ENCODE measurements at regions of chr5 and their contacts with region 1.

Region 1: DNA sequence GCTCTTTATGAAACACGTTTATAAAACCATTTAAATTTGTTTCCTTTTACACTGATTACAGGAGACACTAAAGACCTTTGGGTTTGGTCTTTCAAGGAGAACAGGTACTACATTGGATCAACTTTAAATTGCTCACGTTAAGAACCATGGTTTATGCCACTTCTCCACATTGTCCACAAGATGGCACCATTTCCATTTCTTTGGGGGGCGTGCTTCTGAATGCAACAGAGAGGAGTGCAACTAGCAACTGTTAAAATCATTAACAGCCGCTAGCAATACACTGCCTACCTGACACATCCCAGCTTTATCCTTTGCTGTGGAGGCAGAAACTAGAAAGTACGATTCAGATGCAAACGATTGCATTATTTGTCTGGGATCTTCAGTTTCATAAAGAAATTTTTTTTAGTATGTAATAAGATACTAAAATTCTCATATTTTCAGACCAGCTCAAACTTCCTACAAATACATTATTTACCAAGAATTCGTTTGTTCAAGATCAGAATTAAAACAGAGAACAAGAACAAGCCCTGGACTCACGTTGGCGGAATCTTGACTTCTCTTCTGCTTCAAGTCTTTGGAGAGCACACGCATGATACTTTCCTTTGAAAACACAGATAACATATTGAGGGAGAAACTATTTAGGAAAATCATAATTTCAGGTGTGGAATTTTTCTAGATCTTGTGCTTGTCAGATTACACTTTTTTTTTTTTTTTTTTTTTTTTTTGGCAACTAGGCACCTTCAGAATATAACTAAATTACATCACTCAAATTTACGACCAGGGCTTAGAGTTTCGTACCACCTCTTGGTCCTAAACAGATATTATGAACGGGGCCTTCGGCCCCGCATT is 702 bp downstream of the CDC20B start:
- DNase-seq: peak; percentile 21 to 92
- ATAC-seq: peak; percentile 59 to 75 (median 63)
- H3K4me3 ChIP-seq: peak overlapping the region; percentile 51
- H3K4me3 Mint-ChIP-seq: peak overlapping the region; percentile 86
- H3K27ac ChIP-seq: peak overlapping the region; percentile 20
- H3K27ac Mint-ChIP-seq: peak overlapping the region; percentile 82 to 94
- H3K4me1 ChIP-seq: peaks cover 30% of the 10 kb centered on the region
- H3K4me1 Mint-ChIP-seq: peaks cover 26 to 36% of the 10 kb centered on the region in 2 donors
- H3K27me3 ChIP-seq: peaks cover 52% of the 10 kb centered on the region
- H3K27me3 Mint-ChIP-seq: peaks cover 38 to 55% of the 10 kb centered on the region in 2 donors
- CTCF ChIP-seq: peak; percentile 88

Region 2: GRCh38 chr5:54310433-54311175 is 861.7 kb before region 1 on chr5 and contains the start of gene ARL15:
- intact Hi-C with region 1: loop called (anchors 10 kb)
- DNase-seq: peak; percentile 96 to 98
- ATAC-seq: peak; percentile 93 to 98 (median 94)
- H3K4me3 ChIP-seq: peak within 1 kb of the TSS; percentile 79
- H3K4me3 Mint-ChIP-seq: peak within 1 kb of the TSS; percentile 98
- H3K27ac ChIP-seq: peak within 1 kb of the TSS; percentile 67
- H3K27ac Mint-ChIP-seq: peak within 1 kb of the TSS; percentile 90 to 98
- H3K4me1 ChIP-seq: peaks cover 14% of the 10 kb centered on the region
- H3K4me1 Mint-ChIP-seq: peaks cover 44 to 46% of the 10 kb centered on the region in 2 donors
- H3K27me3 ChIP-seq: no peaks in the 10 kb centered on the region
- H3K27me3 Mint-ChIP-seq: peaks cover 0 to 7% of the 10 kb centered on the region in 2 donors
- CTCF ChIP-seq: no peak
- total RNA-seq, gene ARL15: 28.9 to 35.1 (median 33.1) TPM

Region 3: DNA sequence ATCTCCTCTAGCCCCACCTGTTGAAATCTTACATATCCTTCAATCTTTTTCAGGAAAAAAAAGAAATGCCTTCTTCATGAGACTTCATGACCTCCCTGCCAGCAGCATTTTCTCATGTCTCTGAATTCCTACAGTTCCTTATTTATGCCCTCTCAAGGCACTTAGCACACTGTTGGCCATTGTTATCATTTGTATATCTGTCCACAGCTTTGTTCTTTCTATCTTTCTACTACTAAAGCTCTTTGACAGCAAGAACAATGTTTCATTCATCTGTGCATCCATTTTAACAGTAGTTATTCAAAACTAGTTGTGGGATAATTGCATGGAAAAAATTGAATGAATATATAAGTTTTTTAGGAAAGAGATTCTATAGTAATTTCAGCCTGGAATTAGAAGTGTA is 90.7 kb before region 1 on chr5:
- intact Hi-C with region 1: no loop called
- DNase-seq: no peak
- ATAC-seq: no peak
- H3K4me3 ChIP-seq: no peak overlapping the region
- H3K4me3 Mint-ChIP-seq: no peak overlapping the region
- H3K27ac ChIP-seq: no peak overlapping the region
- H3K27ac Mint-ChIP-seq: no peak overlapping the region
- H3K4me1 ChIP-seq: no peaks in the 10 kb centered on the region
- H3K4me1 Mint-ChIP-seq: peaks cover 11% of the 10 kb centered on the region in 2 donors
- H3K27me3 ChIP-seq: no peaks in the 10 kb centered on the region
- H3K27me3 Mint-ChIP-seq: no peaks in the 10 kb centered on the region
- CTCF ChIP-seq: no peak

Region 4: DNA sequence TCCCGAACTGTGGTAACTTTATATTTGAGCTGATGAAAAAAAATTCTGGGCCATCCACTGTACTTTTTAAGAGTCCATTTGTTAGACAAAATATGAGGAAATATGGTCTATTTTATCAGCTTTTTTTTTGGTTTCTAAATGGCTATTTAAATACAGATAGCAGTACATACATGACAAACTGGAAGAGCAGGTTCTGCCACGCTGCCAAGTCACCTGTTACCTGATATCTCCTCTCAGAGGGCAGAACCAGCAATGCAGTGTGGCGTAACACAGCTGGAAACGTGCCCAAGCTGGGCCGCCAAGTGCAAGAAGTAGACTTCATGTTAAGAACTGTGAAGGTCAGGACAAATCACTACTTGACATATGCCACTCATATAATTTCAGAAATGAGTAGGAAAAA is 46.7 kb after region 1 on chr5:
- intact Hi-C with region 1: no loop called
- DNase-seq: no peak
- ATAC-seq: no peak
- H3K4me3 ChIP-seq: no peak overlapping the region
- H3K4me3 Mint-ChIP-seq: no peak overlapping the region
- H3K27ac ChIP-seq: no peak overlapping the region
- H3K27ac Mint-ChIP-seq: no peak overlapping the region
- H3K4me1 ChIP-seq: peaks cover 21% of the 10 kb centered on the region
- H3K4me1 Mint-ChIP-seq: peaks cover 21% of the 10 kb centered on the region in 2 donors
- H3K27me3 ChIP-seq: peaks cover 37% of the 10 kb centered on the region
- H3K27me3 Mint-ChIP-seq: peaks cover 55 to 62% of the 10 kb centered on the region in 2 donors
- CTCF ChIP-seq: no peak

Region 5: GRCh38 chr5:55232985-55233928 is 61.0 kb after region 1 on chr5 and contains the start of gene CCNO:
- intact Hi-C with region 1: loop called (anchors 1 kb)
- DNase-seq: peak; percentile 29 to 74
- ATAC-seq: peak; percentile 66 to 76 (median 71)
- H3K4me3 ChIP-seq: peak within 1 kb of the TSS; percentile 43
- H3K4me3 Mint-ChIP-seq: peak within 1 kb of the TSS; percentile 82
- H3K27ac ChIP-seq: no peak within 1 kb of the TSS
- H3K27ac Mint-ChIP-seq: peak within 1 kb of the TSS in 1 of 2 donors; percentile 61
- H3K4me1 ChIP-seq: peaks cover 36% of the 10 kb centered on the region
- H3K4me1 Mint-ChIP-seq: peaks cover 30 to 31% of the 10 kb centered on the region in 2 donors
- H3K27me3 ChIP-seq: peaks cover 60% of the 10 kb centered on the region
- H3K27me3 Mint-ChIP-seq: peaks cover 57 to 58% of the 10 kb centered on the region in 2 donors
- CTCF ChIP-seq: no peak
- total RNA-seq, gene CCNO: not detected

Region 6: GRCh38 chr5:55286411-55286933 is 114.2 kb after region 1 on chr5:
- intact Hi-C with region 1: no loop called
- DNase-seq: no peak
- ATAC-seq: no peak
- H3K4me3 ChIP-seq: no peak overlapping the region
- H3K4me3 Mint-ChIP-seq: no peak overlapping the region
- H3K27ac ChIP-seq: no peak overlapping the region
- H3K27ac Mint-ChIP-seq: no peak overlapping the region
- H3K4me1 ChIP-seq: no peaks in the 10 kb centered on the region
- H3K4me1 Mint-ChIP-seq: no peaks in the 10 kb centered on the region
- H3K27me3 ChIP-seq: no peaks in the 10 kb centered on the region
- H3K27me3 Mint-ChIP-seq: no peaks in the 10 kb centered on the region
- CTCF ChIP-seq: no peak

Region 7: DNA sequence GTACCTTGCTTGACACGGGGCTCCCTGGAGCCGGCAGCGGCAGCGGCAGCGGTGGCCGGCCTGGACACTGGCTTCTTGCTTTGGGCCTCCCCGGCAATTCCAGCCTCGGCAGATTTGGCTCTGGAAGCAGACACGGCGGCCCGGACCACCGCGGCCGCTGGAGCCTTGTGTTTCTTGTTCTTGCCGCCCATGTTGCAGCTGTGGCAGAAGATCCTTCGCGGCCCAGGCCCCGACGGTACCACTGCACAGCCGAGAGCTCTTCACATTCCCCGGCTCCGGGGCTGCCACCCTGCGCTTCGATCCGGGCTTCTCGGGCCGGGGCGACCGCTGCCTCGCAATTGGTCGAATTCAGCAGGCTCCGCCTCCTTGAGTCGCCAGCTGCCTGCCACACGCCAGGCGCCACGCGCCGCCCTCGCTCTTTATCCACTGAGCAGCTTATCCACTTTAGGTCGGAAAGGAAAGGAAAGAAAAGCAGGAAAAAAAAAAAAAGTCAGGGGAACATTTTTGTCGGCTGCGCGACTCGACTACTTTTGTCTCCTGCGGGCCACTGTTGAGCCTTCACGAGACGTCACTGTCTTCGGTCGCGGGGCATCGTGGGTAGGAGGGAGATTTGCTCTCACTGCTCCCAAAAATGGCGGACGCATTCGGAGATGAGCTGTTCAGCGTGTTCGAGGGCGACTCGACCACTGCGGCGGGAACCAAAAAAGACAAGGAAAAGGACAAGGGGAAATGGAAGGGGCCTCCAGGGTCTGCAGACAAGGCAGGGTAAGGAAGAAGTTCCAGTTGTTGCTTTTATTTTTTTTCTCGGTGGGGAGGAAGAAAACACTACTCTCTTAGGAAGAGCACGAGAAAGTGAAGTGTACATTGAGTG is 135.3 kb after region 1 on chr5 and contains the starts of genes DHX29 and MTREX:
- intact Hi-C with region 1: loop called (anchors 2 kb)
- DNase-seq: peak; percentile 90 to 93
- ATAC-seq: peak; percentile 91 to 95 (median 93)
- H3K4me3 ChIP-seq: peak within 1 kb of the TSS; percentile 64
- H3K4me3 Mint-ChIP-seq: no peak within 1 kb of the TSS
- H3K27ac ChIP-seq: peak within 1 kb of the TSS; percentile 93
- H3K27ac Mint-ChIP-seq: no peak within 1 kb of the TSS
- H3K4me1 ChIP-seq: peaks cover 17% of the 10 kb centered on the region
- H3K4me1 Mint-ChIP-seq: peaks cover 23 to 24% of the 10 kb centered on the region in 2 donors
- H3K27me3 ChIP-seq: no peaks in the 10 kb centered on the region
- H3K27me3 Mint-ChIP-seq: no peaks in the 10 kb centered on the region
- CTCF ChIP-seq: no peak
- total RNA-seq, gene DHX29: 16.7 to 22.0 (median 19.3) TPM
- total RNA-seq, gene MTREX: 64.5 to 82.2 (median 77.6) TPM

Region 8: DNA sequence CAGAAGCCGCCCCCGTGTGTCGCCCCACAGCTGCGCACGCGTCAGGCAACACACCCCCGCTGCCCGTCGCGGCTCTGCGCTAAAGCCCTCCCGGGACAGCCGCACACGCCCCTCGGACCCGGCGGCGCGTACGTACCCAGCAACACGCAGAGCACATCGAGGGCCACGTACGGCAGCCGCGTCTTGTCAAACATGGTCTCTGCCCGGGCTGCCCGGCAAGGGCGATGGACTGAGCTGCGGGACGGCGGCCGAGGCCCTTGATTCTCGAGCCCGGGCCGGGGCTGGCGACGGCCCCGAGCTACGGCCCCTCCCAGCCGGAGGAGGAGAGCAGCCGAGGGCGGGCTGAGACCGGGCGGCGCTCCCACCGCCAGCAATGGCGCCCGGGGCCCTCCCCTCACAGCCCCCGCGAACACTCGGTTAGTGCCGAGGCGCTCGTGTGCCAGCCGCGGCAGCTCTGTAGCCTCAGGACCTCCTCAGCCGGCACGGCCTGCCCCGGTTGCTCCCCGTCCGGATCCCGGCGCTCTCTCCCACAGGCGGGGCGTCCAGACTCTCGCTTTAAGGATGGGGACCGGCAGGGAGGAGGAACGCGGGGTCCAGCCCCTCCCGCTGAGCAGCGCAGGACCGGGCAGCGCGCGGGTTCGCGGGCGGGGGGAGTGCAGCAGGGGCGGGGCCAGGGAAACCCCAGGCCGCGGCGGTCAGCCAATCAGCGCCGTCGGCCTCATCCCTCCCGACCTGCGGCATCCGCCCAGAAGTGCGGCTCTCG is 362.3 kb after region 1 on chr5 and contains the start of gene PLPP1:
- intact Hi-C with region 1: loop called (anchors 10 kb)
- DNase-seq: peak; percentile 80 to 92
- ATAC-seq: peak; percentile 81 to 91 (median 84)
- H3K4me3 ChIP-seq: peak within 1 kb of the TSS; percentile 81
- H3K4me3 Mint-ChIP-seq: peak within 1 kb of the TSS; percentile 78
- H3K27ac ChIP-seq: peak within 1 kb of the TSS; percentile 86
- H3K27ac Mint-ChIP-seq: peak within 1 kb of the TSS; percentile 61 to 90
- H3K4me1 ChIP-seq: peaks cover 12% of the 10 kb centered on the region
- H3K4me1 Mint-ChIP-seq: peaks cover 8 to 17% of the 10 kb centered on the region in 2 donors
- H3K27me3 ChIP-seq: no peaks in the 10 kb centered on the region
- H3K27me3 Mint-ChIP-seq: peaks cover 0 to 4% of the 10 kb centered on the region in 2 donors
- CTCF ChIP-seq: no peak
- total RNA-seq, gene PLPP1: 3.3 to 5.5 (median 4.2) TPM

Region 9: DNA sequence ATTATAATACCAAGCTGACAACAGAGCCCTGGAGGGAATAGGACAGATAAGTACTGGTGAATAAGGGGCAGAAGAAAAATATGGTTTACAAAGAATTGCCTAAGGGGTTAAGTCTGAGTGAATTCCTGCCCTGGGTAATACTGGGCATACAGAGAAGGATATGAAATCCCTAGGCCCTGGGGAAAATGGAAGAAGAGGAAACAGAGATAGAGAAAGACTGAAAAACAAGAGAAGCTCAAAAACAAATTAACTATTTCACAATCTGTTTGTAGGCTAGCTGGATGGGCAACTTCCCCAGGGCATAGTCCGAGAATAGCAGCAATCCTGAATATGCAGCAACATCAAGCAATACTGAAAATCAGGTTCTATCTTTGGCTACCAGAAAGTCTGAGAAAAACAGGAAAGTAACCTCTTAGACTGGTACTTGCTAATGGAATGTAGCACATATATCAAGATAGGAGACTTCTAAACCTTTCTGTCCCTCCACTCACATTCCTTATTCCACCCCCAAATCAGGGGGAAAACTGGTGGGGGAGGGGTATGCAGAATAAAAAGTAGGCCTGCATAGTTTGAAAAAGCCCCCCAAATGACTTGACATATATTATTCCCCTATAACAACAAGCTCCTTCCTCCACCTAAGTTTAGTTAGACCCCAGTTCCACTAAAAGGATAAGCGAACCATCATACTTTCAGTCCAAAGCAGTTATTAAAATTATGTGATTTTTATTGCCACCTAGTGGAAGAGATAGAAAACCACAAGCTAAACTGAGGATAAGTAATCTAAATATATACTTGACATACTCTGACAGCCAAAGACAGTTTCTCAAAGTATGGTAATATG is 519.2 kb after region 1 on chr5:
- intact Hi-C with region 1: loop called (anchors 5 kb)
- DNase-seq: peak in 1 of 2 donors; percentile 51
- ATAC-seq: peak in 2 of 3 donors; percentile 48 to 49
- H3K4me3 ChIP-seq: no peak overlapping the region
- H3K4me3 Mint-ChIP-seq: no peak overlapping the region
- H3K27ac ChIP-seq: no peak overlapping the region
- H3K27ac Mint-ChIP-seq: no peak overlapping the region
- H3K4me1 ChIP-seq: no peaks in the 10 kb centered on the region
- H3K4me1 Mint-ChIP-seq: peaks cover 0 to 5% of the 10 kb centered on the region in 2 donors
- H3K27me3 ChIP-seq: no peaks in the 10 kb centered on the region
- H3K27me3 Mint-ChIP-seq: no peaks in the 10 kb centered on the region
- CTCF ChIP-seq: peak; percentile 74

Measured in natural killer cell (primary cell).